K562 (cell line): ENCODE measurements at regions of chr6 and their contacts with region 1.

Region 1: GRCh38 chr6:43910638-43911353 is 140.8 kb downstream of the VEGFA start:
- DNase-seq: peak in 1 of 4 experiments; percentile 73
- ATAC-seq: peak; percentile 89
- H3K4me3 ChIP-seq: peak overlapping the region; percentile 4; the same call in 1 of the 2 replicates
- H3K27ac ChIP-seq: peak overlapping the region; percentile 72
- H3K4me1 ChIP-seq: peaks cover 18 to 63% of the 10 kb centered on the region in 2 experiments
- H3K27me3 ChIP-seq: no peaks in the 10 kb centered on the region
- CTCF ChIP-seq: no peak
- EP300 ChIP-seq: peak; percentile 97
- POLR2A ChIP-seq: no peak
- RAD21 ChIP-seq: peak; percentile 30 to 43; a peak in 3 of 4 replicates

Region 2: GRCh38 chr6:43945768-43946080 is 34.9 kb after region 1 on chr6:
- CTCF ChIA-PET with region 1: no interaction called
- POLR2A ChIA-PET with region 1: interaction called, 7 read pairs
- in situ Hi-C with region 1: no loop called
- intact Hi-C with region 1: loop called (anchors 2 kb)
- DNase-seq: no peak
- ATAC-seq: no peak
- H3K4me3 ChIP-seq: no peak overlapping the region
- H3K27ac ChIP-seq: peak overlapping the region; percentile 72
- H3K4me1 ChIP-seq: peaks cover 13 to 47% of the 10 kb centered on the region in 2 experiments; a peak in 4 of 5 replicates
- H3K27me3 ChIP-seq: no peaks in the 10 kb centered on the region
- CTCF ChIP-seq: no peak
- EP300 ChIP-seq: no peak
- POLR2A ChIP-seq: no peak
- RAD21 ChIP-seq: no peak

Region 3: GRCh38 chr6:44820321-44820720 is 909.5 kb after region 1 on chr6:
- CTCF ChIA-PET with region 1: no interaction called
- POLR2A ChIA-PET with region 1: no interaction called
- in situ Hi-C with region 1: no loop called
- intact Hi-C with region 1: no loop called
- DNase-seq: no peak
- ATAC-seq: no peak
- H3K4me3 ChIP-seq: no peak overlapping the region
- H3K27ac ChIP-seq: no peak overlapping the region
- H3K4me1 ChIP-seq: no peaks in the 10 kb centered on the region
- H3K27me3 ChIP-seq: no peaks in the 10 kb centered on the region
- CTCF ChIP-seq: no peak
- EP300 ChIP-seq: no peak
- POLR2A ChIP-seq: no peak
- RAD21 ChIP-seq: no peak